K562 (cell line): ENCODE measurements at regions of chr16 and their contacts with region 1.

Region 1: DNA sequence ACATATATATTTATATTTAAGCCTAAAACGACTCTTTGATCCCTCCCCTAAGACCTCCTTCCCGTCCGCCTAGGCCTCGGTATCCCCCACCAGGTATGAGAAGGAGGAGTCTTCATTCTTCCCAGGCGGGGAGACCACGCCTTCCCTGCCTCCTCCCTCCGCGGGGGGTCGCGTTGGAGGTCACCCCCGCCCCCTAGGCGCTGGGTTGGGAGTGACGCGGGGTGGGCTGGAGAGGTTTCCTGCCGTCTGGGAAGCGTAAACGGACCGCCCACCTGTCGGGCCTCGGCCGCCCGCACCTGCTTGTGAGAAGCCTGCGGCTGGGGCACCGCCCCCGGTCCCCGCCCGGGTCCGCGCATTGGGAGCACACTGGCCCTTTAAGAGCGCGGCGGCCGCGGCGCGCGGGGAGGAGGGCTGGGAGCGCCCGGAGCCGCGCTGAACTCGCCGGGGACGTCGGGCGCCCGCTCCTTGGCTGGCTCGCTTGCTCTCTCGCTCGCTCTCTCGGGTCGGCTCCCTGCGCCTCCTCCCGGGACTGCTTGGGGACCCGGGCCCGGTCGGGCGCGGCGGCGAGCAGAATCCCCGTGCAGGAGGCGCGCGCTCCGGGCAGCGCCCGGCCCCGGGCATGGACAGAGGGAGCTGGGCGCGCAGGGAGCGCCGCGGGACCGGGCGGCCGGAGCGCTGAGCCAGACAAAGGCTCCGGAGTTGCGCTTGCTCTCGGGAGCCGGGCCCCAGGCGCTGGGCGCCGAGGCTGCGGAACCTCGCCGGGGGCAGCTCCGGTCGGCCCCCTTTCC is at the start of gene MMP15:
- DNase-seq: peak; percentile 87 to 92 (median 90)
- ATAC-seq: peak; percentile 81
- H3K4me3 ChIP-seq: peak within 1 kb of the TSS; percentile 79
- H3K27ac ChIP-seq: peak within 1 kb of the TSS; percentile 71
- H3K4me1 ChIP-seq: peaks cover 12 to 52% of the 10 kb centered on the region in 2 experiments; a peak in 4 of 5 replicates
- H3K27me3 ChIP-seq: no peaks in the 10 kb centered on the region
- CTCF ChIP-seq: no peak
- EP300 ChIP-seq: no peak
- POLR2A ChIP-seq: no peak
- RAD21 ChIP-seq: no peak
- polyA plus RNA-seq, gene MMP15: 0.01 to 0.06 TPM

Region 2: GRCh38 chr16:58121132-58121531 is 95.6 kb after region 1 on chr16:
- CTCF ChIA-PET with region 1: interaction called, 20 read pairs
- POLR2A ChIA-PET with region 1: no interaction called
- in situ Hi-C with region 1: loop called (anchors 5 kb)
- intact Hi-C with region 1: loop called (anchors 1 kb)
- DNase-seq: peak; percentile 25 to 87 (median 58)
- ATAC-seq: peak; percentile 78
- H3K4me3 ChIP-seq: peak overlapping the region; percentile 25; the same call in 1 of the 2 replicates
- H3K27ac ChIP-seq: peak overlapping the region; percentile 72
- H3K4me1 ChIP-seq: peaks cover 13 to 37% of the 10 kb centered on the region in 2 experiments; a peak in 4 of 5 replicates
- H3K27me3 ChIP-seq: no peaks in the 10 kb centered on the region
- CTCF ChIP-seq: no peak
- EP300 ChIP-seq: peak; percentile 53; the same call in 1 of the 2 replicates
- POLR2A ChIP-seq: no peak
- RAD21 ChIP-seq: no peak

Region 3: DNA sequence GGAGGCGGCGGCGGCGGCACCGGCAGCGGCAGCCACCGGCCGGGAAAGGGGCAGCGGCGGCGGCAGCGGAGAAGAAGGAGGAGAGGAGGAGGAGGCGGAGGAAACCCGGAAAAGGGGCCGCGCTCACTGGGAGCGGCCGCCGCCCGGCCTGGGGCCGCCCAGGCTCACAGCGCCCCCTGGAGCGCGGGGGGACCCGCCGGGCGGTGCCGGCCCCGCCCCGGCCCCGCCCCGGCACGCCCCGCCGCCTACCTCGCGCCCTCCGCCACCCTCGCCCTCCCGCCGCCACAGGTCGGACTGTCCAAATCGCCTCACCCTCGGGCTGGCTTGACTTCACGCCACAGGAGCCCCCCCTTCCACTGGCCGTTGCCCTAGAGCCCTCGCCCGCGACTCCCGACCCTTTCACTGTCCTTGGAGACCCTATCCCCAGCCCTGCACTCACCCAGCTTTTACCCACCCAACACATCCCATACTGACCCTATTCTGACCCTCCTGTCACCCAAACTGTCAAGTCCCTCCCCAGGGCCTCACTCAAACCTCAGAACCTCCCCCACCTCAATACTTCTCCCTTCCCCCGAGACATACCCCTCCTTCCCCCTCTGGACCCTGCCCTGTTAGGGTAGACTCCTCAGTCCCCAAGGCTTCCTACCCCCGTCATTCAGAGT is 172.6 kb after region 1 on chr16 and contains the start of gene CSNK2A2:
- CTCF ChIA-PET with region 1: no interaction called
- POLR2A ChIA-PET with region 1: interaction called, 3 read pairs
- in situ Hi-C with region 1: no loop called
- intact Hi-C with region 1: loop called (anchors 10 kb)
- DNase-seq: peak; percentile 86 to 96 (median 96)
- ATAC-seq: peak; percentile 97
- H3K4me3 ChIP-seq: peak within 1 kb of the TSS; percentile 64
- H3K27ac ChIP-seq: peak within 1 kb of the TSS; percentile 66
- H3K4me1 ChIP-seq: peaks cover 13 to 17% of the 10 kb centered on the region in 2 experiments; a peak in 4 of 5 replicates
- H3K27me3 ChIP-seq: no peaks in the 10 kb centered on the region; a peak in 1 of 5 replicates
- CTCF ChIP-seq: peak in 2 of 3 experiments; percentile 58 to 61; a peak in 3 of 6 replicates
- EP300 ChIP-seq: no peak
- POLR2A ChIP-seq: peak; percentile 62
- RAD21 ChIP-seq: no peak
- polyA plus RNA-seq, gene CSNK2A2: 23.4 to 25.2 TPM

Region 4: DNA sequence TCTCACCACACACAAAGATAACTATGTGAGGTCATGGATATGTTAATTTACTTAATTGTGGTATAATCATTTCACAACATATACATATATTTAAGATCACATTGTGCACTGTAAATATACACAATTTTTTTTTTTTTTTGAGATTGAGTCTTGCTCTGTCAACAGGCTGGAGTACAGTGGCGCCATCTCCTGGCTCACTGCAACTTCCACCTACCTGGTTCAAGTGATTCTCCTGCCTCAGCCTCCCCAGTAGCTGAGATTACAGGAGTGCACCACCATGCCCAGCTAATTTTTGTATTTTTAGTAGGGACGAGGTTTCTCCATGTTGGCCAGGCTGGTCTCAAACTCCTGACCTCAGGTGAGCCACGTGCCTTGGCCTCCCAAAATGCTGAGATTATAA is 280.8 kb after region 1 on chr16:
- CTCF ChIA-PET with region 1: no interaction called
- POLR2A ChIA-PET with region 1: no interaction called
- in situ Hi-C with region 1: no loop called
- intact Hi-C with region 1: loop called (anchors 5 kb)
- DNase-seq: peak in 1 of 4 experiments; percentile 69
- ATAC-seq: peak; percentile 78
- H3K4me3 ChIP-seq: no peak overlapping the region
- H3K27ac ChIP-seq: no peak overlapping the region
- H3K4me1 ChIP-seq: no peaks in the 10 kb centered on the region
- H3K27me3 ChIP-seq: no peaks in the 10 kb centered on the region
- CTCF ChIP-seq: peak; percentile 57 to 66 (median 61); a peak in 5 of 6 replicates
- EP300 ChIP-seq: no peak
- POLR2A ChIP-seq: no peak
- RAD21 ChIP-seq: peak; percentile 41 to 72; a peak in 3 of 4 replicates

Region 5: GRCh38 chr16:58324792-58325191 is 299.2 kb after region 1 on chr16:
- CTCF ChIA-PET with region 1: no interaction called
- POLR2A ChIA-PET with region 1: no interaction called
- in situ Hi-C with region 1: no loop called
- intact Hi-C with region 1: loop called (anchors 5 kb)
- DNase-seq: no peak
- ATAC-seq: no peak
- H3K4me3 ChIP-seq: no peak overlapping the region
- H3K27ac ChIP-seq: no peak overlapping the region
- H3K4me1 ChIP-seq: no peaks in the 10 kb centered on the region
- H3K27me3 ChIP-seq: peaks cover 5 to 10% of the 10 kb centered on the region in 2 experiments; a peak in 4 of 5 replicates
- CTCF ChIP-seq: no peak
- EP300 ChIP-seq: no peak
- POLR2A ChIP-seq: no peak
- RAD21 ChIP-seq: no peak

Region 6: DNA sequence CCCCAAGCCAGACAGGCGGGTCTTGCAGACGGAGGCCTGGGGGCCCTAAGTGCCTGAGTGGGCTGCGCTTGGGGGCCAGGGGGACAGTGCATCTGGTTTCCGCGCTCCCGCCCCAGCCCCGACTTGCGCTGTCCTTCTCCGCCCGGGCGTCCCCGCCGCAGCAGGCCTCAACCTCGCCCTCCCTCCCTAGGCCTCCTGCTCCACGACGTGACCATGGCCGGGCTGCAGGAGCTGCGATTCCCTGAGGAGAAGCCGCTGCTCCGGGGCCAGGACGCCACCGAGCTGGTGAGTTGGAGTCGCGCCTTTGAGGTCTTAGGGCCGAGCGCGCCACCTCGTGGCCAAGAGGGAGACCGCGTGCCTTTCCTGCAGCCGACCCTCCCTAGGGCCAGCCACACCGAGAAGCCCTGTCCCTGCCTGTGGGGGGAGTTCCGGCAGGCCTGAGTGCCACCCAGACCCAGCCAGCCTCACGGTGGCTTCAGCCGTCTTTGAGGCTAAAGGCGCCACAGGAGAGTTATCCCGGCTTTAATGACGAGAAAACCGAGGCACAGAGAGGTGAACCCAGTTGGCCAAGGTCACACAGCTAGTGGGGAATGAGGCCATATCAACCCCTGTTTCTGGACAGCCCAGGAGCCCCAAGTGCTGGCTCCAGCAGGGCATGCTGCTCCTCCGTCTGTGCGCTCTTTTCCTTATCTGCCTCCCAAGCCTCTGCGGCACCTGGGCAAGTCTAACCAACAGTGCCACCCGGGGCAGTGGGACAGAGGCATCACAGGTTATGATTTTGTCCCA is 462.2 kb after region 1 on chr16:
- CTCF ChIA-PET with region 1: no interaction called
- POLR2A ChIA-PET with region 1: no interaction called
- in situ Hi-C with region 1: no loop called
- intact Hi-C with region 1: loop called (anchors 5 kb)
- DNase-seq: peak; percentile 83 to 87 (median 84)
- ATAC-seq: peak; percentile 97
- H3K4me3 ChIP-seq: no peak overlapping the region
- H3K27ac ChIP-seq: no peak overlapping the region
- H3K4me1 ChIP-seq: peaks cover 10 to 24% of the 10 kb centered on the region in 2 experiments; a peak in 4 of 5 replicates
- H3K27me3 ChIP-seq: peaks cover 0 to 38% of the 10 kb centered on the region in 2 experiments; a peak in 3 of 5 replicates
- CTCF ChIP-seq: peak; percentile 90 to 97 (median 92)
- EP300 ChIP-seq: no peak
- POLR2A ChIP-seq: no peak
- RAD21 ChIP-seq: peak; percentile 94 to 98

Region 7: GRCh38 chr16:58755989-58756649 is 730.6 kb after region 1 on chr16:
- CTCF ChIA-PET with region 1: no interaction called
- POLR2A ChIA-PET with region 1: no interaction called
- in situ Hi-C with region 1: no loop called
- intact Hi-C with region 1: loop called (anchors 10 kb)
- DNase-seq: peak; percentile 54 to 86 (median 64)
- ATAC-seq: peak; percentile 98
- H3K4me3 ChIP-seq: no peak overlapping the region
- H3K27ac ChIP-seq: no peak overlapping the region
- H3K4me1 ChIP-seq: peaks cover 0 to 6% of the 10 kb centered on the region in 2 experiments; a peak in 3 of 5 replicates
- H3K27me3 ChIP-seq: peaks cover 0 to 9% of the 10 kb centered on the region in 2 experiments; a peak in 3 of 5 replicates
- CTCF ChIP-seq: peak; percentile 80 to 89 (median 87)
- EP300 ChIP-seq: no peak
- POLR2A ChIP-seq: no peak
- RAD21 ChIP-seq: peak; percentile 79 to 88